ENCODE measurements at regions of chr17 and their contacts with region 1.

Region 1: DNA sequence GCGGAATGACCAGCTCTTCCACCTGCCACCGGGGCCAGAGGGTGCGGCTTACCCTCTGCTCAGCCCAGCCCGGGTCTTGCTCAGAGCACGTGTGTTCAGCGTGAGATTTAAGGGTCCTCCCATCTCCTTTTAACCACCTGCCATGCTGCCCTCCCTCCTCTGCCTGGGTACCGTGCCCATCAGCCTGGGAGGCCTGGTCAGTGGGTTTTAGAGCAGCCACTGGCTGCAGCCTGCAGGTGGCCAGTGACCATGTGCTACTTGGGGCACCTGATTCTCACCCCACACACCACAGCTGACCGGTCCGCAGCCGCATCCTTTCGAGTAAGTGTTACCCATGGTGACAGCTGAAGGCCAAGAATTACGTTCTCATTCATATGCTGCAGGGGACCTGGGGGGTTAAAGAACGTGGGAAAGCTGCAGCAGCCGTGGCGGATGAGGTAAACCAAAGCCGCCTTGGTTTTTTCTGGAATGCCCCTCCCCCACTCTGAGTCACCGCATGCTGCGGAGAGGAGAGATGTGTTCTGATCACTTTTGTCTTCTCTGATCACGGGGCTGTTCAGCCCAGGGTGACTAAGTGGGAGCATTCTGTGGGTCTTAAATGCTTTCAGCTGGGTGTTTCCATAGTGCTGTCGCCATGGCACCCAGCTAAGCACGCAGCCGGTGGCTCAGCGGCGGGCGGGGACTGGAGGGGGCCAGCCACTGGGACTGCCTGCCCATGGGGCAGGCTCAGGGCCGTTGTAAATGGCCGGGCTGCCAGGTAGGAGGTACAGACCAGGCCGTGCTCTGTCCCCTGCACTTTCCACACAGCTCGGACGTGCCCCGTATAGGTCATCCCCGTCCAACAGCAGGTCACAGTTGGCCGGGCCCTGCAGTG is 59.8 kb downstream of the BAIAP2 start:
- DNase-seq: peak; percentile 97
- H3K4me3 ChIP-seq: no peak overlapping the region
- H3K27ac ChIP-seq: peak overlapping the region; percentile 79
- H3K4me1 ChIP-seq: peaks cover 57% of the 10 kb centered on the region
- H3K27me3 ChIP-seq: no peaks in the 10 kb centered on the region
- CTCF ChIP-seq: no peak

Region 2: DNA sequence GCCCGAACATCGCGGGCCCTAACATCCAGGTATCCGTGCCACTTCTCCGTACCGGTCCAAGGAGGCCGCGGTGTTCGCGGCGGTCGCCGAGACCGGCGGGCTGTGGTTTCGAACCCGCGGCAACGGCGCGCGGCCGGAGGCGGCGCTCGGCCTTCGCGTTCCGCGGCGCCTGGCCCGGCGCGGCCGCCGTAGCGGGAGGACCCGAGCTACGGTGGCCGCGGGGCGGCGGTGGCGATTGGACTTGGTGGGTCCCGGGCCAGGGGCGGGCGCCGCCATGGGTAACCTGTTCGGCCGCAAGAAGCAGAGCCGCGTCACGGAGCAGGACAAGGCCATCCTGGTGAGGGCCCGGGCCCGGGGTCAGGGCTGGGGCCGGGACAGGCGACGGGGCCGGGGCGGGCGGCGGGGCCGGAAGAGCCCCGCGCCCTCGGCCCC is 103.1 kb before region 1 on chr17 and contains the start of gene CHMP6:
- CTCF ChIA-PET with region 1: interaction called, 11 read pairs
- POLR2A ChIA-PET with region 1: no interaction called
- intact Hi-C with region 1: no loop called
- DNase-seq: peak; percentile 87
- H3K4me3 ChIP-seq: peak within 1 kb of the TSS; percentile 98
- H3K27ac ChIP-seq: peak within 1 kb of the TSS; percentile 86
- H3K4me1 ChIP-seq: peaks cover 3% of the 10 kb centered on the region
- H3K27me3 ChIP-seq: no peaks in the 10 kb centered on the region
- CTCF ChIP-seq: no peak
- total RNA-seq, gene CHMP6: 18.7 and 21.3 TPM in 2 replicates

Region 3: GRCh38 chr17:81018044-81018802 is 76.5 kb before region 1 on chr17:
- CTCF ChIA-PET with region 1: interaction called, 17 read pairs
- POLR2A ChIA-PET with region 1: no interaction called
- intact Hi-C with region 1: no loop called
- DNase-seq: peak; percentile 86
- H3K4me3 ChIP-seq: peak overlapping the region; percentile 17
- H3K27ac ChIP-seq: peak overlapping the region; percentile 75
- H3K4me1 ChIP-seq: peaks cover 10% of the 10 kb centered on the region
- H3K27me3 ChIP-seq: no peaks in the 10 kb centered on the region
- CTCF ChIP-seq: no peak

Region 4: GRCh38 chr17:81034779-81035388 is 59.9 kb before region 1 on chr17 and contains the start of gene BAIAP2:
- CTCF ChIA-PET with region 1: interaction called, 10 read pairs
- POLR2A ChIA-PET with region 1: no interaction called
- intact Hi-C with region 1: loop called (anchors 5 kb)
- DNase-seq: peak; percentile 96
- H3K4me3 ChIP-seq: peak within 1 kb of the TSS; percentile 91
- H3K27ac ChIP-seq: peak within 1 kb of the TSS; percentile 70
- H3K4me1 ChIP-seq: peaks cover 29% of the 10 kb centered on the region
- H3K27me3 ChIP-seq: no peaks in the 10 kb centered on the region
- CTCF ChIP-seq: no peak
- total RNA-seq, gene BAIAP2: 51.6 and 54.9 TPM in 2 replicates

Region 5: DNA sequence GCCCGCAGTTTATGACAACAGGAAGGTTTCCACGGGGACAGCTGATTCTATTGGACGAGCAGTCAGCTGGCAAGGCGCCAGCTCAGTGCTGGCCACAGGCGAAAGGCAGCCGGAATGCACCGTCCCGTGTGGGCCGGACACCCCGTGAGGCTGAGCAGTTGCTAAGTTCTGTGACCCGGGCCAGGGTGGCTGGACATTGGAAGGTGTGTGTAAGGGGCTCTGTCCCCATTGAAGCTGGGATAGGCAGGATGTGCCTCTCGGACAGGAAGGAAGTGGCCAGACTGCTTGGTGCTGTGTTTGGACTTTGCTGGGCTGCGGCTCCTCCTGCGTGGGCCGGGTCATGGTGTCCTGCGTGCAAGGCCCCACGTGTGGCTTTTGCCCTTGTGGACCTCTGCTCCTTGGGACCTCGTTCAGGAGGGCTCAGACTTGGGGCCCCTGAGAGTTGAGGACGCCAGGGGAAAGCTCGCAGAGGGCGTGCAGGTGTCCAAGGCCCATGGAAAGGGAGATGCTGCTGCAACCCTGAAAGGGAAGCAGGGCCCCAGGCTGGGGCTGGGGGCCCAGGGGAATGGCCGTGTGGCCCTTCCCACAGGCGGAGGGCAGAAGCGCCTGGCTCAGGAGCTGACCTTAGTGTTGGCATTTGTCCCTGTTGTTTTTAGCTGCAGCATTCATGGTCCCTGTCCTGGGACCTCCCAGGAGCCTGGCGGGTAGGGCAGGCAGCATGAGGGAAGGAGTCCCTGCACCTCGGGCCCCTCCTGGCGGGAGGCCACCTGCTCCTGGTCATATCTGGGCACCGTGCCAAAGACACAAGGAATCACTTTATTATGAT is 49.8 kb before region 1 on chr17:
- CTCF ChIA-PET with region 1: interaction called, 10 read pairs
- POLR2A ChIA-PET with region 1: no interaction called
- intact Hi-C with region 1: no loop called
- DNase-seq: peak; percentile 33
- H3K4me3 ChIP-seq: no peak overlapping the region
- H3K27ac ChIP-seq: no peak overlapping the region
- H3K4me1 ChIP-seq: peaks cover 26% of the 10 kb centered on the region
- H3K27me3 ChIP-seq: no peaks in the 10 kb centered on the region
- CTCF ChIP-seq: no peak

Measured in A673 (cell line).